Activated T-helper 1 cell treated with anti-CD3 and anti-CD28 coated beads, Interleukin-12 subunit alpha, Interleukin-12 subunit beta, Interleukin-2, Interleukin-4 antibody, amounts not matched to agents 30 ng/mL and 10 ng/mL and 1 ng/mL, durations not matched to agents 14 hours and 24 hours and 36 hours (primary cell): ENCODE measurements at regions of chr7 and their contacts with region 1.

Region 1: GRCh38 chr7:1664711-1665548 is 5.1 kb upstream of the ELFN1 start:
- DNase-seq: peak; percentile 16
- H3K4me3 Mint-ChIP-seq: no peak overlapping the region
- H3K27ac Mint-ChIP-seq: no peak overlapping the region
- H3K4me1 Mint-ChIP-seq: no peaks in the 10 kb centered on the region
- H3K27me3 Mint-ChIP-seq: peaks cover 41% of the 10 kb centered on the region

Region 2: GRCh38 chr7:1234881-1235500 is 429.9 kb before region 1 on chr7:
- intact Hi-C with region 1: loop called (anchors 5 kb)
- DNase-seq: no peak
- H3K4me3 Mint-ChIP-seq: no peak overlapping the region
- H3K27ac Mint-ChIP-seq: peak overlapping the region; percentile 90
- H3K4me1 Mint-ChIP-seq: peaks cover 11% of the 10 kb centered on the region
- H3K27me3 Mint-ChIP-seq: peaks cover 50% of the 10 kb centered on the region

Region 3: DNA sequence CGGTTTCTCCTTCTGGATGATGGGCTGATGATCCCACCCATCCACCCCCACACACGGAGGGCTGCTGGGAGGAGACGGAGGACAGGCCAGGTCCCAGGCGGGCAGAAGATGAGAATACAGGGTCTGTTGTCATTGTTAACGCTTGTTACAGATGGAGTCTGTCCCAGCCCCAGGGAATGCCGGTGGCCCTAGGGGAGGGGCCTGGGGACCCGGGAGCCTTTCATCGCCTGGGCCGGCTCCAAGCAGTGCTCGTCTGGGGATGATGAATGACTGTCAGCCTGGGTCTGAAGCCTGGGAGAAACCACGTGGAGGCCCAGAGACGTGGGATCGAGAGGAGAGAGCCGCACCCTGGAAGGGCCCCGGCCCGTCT is 363.1 kb before region 1 on chr7:
- intact Hi-C with region 1: no loop called
- DNase-seq: no peak
- H3K4me3 Mint-ChIP-seq: no peak overlapping the region
- H3K27ac Mint-ChIP-seq: no peak overlapping the region
- H3K4me1 Mint-ChIP-seq: no peaks in the 10 kb centered on the region
- H3K27me3 Mint-ChIP-seq: no peaks in the 10 kb centered on the region